Motor neuron (in vitro differentiated cells): ENCODE measurements at regions of chr17 and their contacts with region 1.

Region 1: GRCh38 chr17:17001874-17002520 is 30.1 kb upstream of the TNFRSF13B start:
- ATAC-seq: peak; percentile 84 to 100 (median 94)
- H3K4me3 ChIP-seq: no peak overlapping the region
- H3K27ac ChIP-seq: no peak overlapping the region
- H3K4me1 ChIP-seq: peaks cover 0 to 3% of the 10 kb centered on the region in 2 donors

Region 2: GRCh38 chr17:16905593-16906191 is 96.3 kb before region 1 on chr17:
- in situ Hi-C with region 1: no loop called
- ATAC-seq: peak in 3 of 8 experiments; percentile 50 to 99 (median 94)
- H3K4me3 ChIP-seq: no peak overlapping the region
- H3K27ac ChIP-seq: no peak overlapping the region
- H3K4me1 ChIP-seq: no peaks in the 10 kb centered on the region

Region 3: GRCh38 chr17:16945663-16946218 is 56.3 kb before region 1 on chr17:
- in situ Hi-C with region 1: no loop called
- ATAC-seq: no peak
- H3K4me3 ChIP-seq: no peak overlapping the region
- H3K27ac ChIP-seq: no peak overlapping the region
- H3K4me1 ChIP-seq: no peaks in the 10 kb centered on the region

Region 4: GRCh38 chr17:17206124-17206912 is 204.3 kb after region 1 on chr17 and contains the start of gene PLD6:
- in situ Hi-C with region 1: loop called in 1 of 9 experiments (anchors 25 kb)
- ATAC-seq: peak in 7 of 8 experiments; percentile 19 to 79 (median 61)
- H3K4me3 ChIP-seq: peak within 1 kb of the TSS in 4 of 5 donors; percentile 25 to 51 (median 34)
- H3K27ac ChIP-seq: peak within 1 kb of the TSS in 1 of 2 donors; percentile 40
- H3K4me1 ChIP-seq: peaks cover 5 to 7% of the 10 kb centered on the region in 2 donors
- total RNA-seq, gene PLD6: 1.9 to 18.2 (median 4.8) TPM